Naive thymus-derived CD8-positive, alpha-beta T cell (primary cell): ENCODE measurements at regions of chr21 and their contacts with region 1.

Region 1: DNA sequence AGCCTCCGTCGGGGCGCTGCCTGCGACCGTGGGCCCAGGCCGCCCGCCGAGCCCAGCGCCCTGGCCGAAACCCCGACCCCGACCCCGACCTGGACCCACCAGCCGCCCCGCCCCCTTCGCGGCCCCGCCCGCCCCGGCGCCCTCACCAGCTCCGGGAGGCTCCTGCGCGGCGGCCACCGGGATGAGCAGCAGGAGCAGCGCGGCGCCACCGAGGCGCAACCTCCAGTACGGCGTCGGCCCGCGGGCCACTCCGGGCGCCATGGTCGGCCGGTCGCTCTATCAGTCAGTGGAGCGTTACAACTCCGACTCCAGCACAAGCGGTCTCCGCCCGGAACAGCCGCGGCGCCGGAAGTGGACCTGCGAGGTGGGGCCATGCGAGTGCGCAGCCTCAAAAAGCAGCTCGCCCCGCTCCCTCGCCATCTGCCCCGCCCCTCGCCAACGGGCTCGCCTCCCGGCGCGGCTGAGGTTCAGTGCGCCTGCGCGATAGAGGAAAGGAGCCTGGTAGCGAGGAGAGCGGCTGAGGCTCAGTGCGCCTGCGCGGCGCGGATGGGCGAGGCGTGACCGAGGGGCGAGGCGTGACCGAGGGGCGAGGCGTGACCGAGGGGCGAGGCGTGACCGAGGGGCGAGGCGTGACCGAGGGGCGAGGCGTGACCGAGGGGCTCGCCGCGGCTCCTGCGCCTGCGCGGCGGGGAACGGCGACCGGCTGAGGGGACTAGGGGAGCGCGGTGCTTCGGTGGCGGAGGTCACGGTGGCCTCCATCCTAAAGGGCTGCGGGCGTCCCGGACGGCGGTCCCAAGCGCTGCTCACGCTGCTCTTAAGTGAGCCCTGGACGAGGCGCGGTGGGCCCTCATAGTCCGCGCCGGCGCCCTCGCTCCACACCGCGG is at the start of gene PTTG1IP:
- DNase-seq: peak; percentile 95 to 100 (median 100)
- ATAC-seq: peak; percentile 75 to 78
- H3K4me3 Mint-ChIP-seq: peak within 1 kb of the TSS; percentile 93 to 98 (median 94)
- H3K27ac Mint-ChIP-seq: peak within 1 kb of the TSS; percentile 88 to 96 (median 94)
- H3K4me1 Mint-ChIP-seq: peaks cover 22 to 69% (median 51%) of the 10 kb centered on the region in 4 donors
- H3K27me3 Mint-ChIP-seq: no peaks in the 10 kb centered on the region
- polyA plus RNA-seq, gene PTTG1IP: 42.4 to 54.1 (median 44.3) TPM

Region 2: GRCh38 chr21:44718571-44718970 is 155.0 kb before region 1 on chr21:
- POLR2A ChIA-PET with region 1: no interaction called
- DNase-seq: no peak
- ATAC-seq: no peak
- H3K4me3 Mint-ChIP-seq: no peak overlapping the region
- H3K27ac Mint-ChIP-seq: peak overlapping the region in 2 of 10 donors; percentile 29 to 50
- H3K4me1 Mint-ChIP-seq: peaks cover 10 to 20% (median 16%) of the 10 kb centered on the region in 4 donors
- H3K27me3 Mint-ChIP-seq: peaks cover 13 to 61% (median 31%) of the 10 kb centered on the region in 5 donors

Region 3: GRCh38 chr21:44801468-44802395 is 71.9 kb before region 1 on chr21 and contains the start of gene UBE2G2:
- POLR2A ChIA-PET with region 1: interaction called, 35 read pairs
- DNase-seq: peak; percentile 77 to 92 (median 88)
- ATAC-seq: peak; percentile 91 to 93
- H3K4me3 Mint-ChIP-seq: peak within 1 kb of the TSS; percentile 92 to 99 (median 97)
- H3K27ac Mint-ChIP-seq: peak within 1 kb of the TSS; percentile 64 to 99 (median 95)
- H3K4me1 Mint-ChIP-seq: peaks cover 23 to 53% (median 46%) of the 10 kb centered on the region in 4 donors
- H3K27me3 Mint-ChIP-seq: no peaks in the 10 kb centered on the region
- polyA plus RNA-seq, gene UBE2G2: 56.2 to 72.8 (median 62.3) TPM

Region 4: GRCh38 chr21:44884097-44884496 is 10.5 kb after region 1 on chr21:
- POLR2A ChIA-PET with region 1: interaction called, 17 read pairs
- DNase-seq: no peak
- ATAC-seq: no peak
- H3K4me3 Mint-ChIP-seq: no peak overlapping the region
- H3K27ac Mint-ChIP-seq: peak overlapping the region in 4 of 10 donors; percentile 21 to 74 (median 38)
- H3K4me1 Mint-ChIP-seq: peaks cover 17 to 40% (median 30%) of the 10 kb centered on the region in 4 donors
- H3K27me3 Mint-ChIP-seq: no peaks in the 10 kb centered on the region

Region 5: DNA sequence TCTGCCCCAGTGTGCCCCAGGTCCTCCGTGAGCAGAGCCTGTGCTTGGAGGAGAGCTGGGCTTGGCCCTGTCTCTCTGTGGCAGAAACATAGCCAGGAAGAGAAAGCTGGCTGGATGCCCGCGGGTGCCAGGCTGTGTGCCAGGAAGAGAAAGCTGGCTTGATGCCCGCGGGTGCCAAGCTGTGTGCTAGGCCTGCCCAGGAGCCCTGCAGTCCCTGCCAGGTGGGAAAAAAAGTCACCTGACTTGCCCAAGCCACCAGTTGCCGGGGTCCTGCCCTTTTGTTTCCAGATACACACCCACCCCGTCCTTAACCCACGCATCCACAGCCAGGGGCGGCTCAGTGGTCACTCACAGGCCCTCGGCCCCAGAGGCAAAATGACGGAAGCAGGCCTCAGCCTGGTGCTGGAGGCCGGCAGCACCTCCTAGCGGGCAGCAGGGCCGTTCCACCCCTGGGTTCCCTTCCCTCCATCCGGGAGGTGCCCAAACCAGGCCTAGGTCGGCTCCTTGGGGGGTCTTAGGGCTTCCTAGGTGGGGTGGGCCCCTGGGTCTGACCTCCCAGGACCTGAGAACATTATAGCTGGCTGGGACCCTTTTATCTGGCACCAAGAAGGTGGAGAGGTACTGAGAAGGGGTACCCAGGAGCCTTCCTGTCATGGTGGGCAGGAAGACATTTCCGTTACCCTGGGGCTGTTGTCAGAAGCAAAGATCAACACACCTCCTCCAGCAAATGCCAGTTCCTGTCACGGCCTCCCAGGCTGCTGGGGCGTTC is 38.0 kb after region 1 on chr21:
- POLR2A ChIA-PET with region 1: interaction called, 25 read pairs
- DNase-seq: peak; percentile 55 to 85 (median 73)
- ATAC-seq: peak; percentile 69 to 82
- H3K4me3 Mint-ChIP-seq: peak overlapping the region; percentile 63 to 91 (median 78)
- H3K27ac Mint-ChIP-seq: peak overlapping the region; percentile 89 to 98 (median 95)
- H3K4me1 Mint-ChIP-seq: peaks cover 38 to 89% (median 80%) of the 10 kb centered on the region in 4 donors
- H3K27me3 Mint-ChIP-seq: no peaks in the 10 kb centered on the region

Region 6: DNA sequence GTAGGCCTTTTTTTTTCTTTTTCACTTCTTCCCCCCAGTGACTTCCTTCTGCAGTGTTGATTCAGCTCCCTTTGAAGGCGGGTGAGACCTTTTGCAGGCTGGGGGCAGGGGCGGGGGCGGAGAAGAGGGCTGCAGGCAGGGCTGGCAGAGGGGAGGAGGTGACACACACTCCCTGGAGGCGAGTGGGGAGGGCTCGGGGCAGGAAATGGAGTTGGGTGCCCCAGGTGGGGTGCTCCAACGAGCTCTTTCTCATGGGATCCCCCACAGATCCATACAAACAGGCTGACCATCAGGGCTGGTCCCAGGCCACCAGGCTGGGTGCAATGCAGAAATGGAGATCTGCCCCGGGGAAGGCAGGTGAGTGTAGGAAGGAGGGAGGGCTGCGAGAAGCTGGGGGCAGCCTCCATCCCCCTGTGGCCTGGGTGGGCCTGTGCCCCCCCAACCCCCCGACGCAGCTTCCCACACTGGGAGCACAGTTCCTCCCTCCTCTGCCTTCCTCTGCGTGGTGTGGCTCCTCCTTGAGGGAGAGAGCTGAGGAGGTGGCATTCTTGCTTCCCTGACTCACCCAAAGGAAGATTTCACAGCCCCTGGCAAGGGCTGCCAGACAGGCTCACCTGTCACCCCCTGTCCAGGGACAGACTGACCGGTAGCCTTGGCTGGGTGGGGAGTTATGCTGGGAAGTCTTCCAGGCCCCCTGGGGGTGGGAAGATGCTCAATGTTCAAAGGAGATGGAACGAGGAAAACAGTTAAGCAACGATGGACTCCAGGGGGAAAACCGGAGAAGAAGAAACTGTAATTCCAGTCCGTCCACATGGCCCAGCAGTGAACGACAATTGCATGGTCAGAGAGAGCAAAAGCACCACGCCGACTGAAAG is 54.2 kb after region 1 on chr21:
- POLR2A ChIA-PET with region 1: interaction called, 91 read pairs
- DNase-seq: peak; percentile 75 to 96 (median 84)
- ATAC-seq: peak; percentile 69 to 82
- H3K4me3 Mint-ChIP-seq: peak overlapping the region; percentile 88 to 96 (median 91)
- H3K27ac Mint-ChIP-seq: peak overlapping the region; percentile 70 to 99 (median 96)
- H3K4me1 Mint-ChIP-seq: peaks cover 50 to 83% (median 78%) of the 10 kb centered on the region in 4 donors
- H3K27me3 Mint-ChIP-seq: no peaks in the 10 kb centered on the region